Caco-2 (cell line): ENCODE measurements at regions of chr1 and their contacts with region 1.

Region 1: GRCh38 chr1:213956295-213956770 is 31.4 kb upstream of the PROX1 start:
- DNase-seq: peak; percentile 77 to 82
- H3K4me3 ChIP-seq: no peak overlapping the region
- H3K4me3 Mint-ChIP-seq: peak overlapping the region; percentile 48
- H3K27ac Mint-ChIP-seq: peak overlapping the region; percentile 69
- H3K4me1 ChIP-seq: peaks cover 33% of the 10 kb centered on the region
- H3K4me1 Mint-ChIP-seq: peaks cover 18% of the 10 kb centered on the region
- H3K27me3 ChIP-seq: no peaks in the 10 kb centered on the region
- H3K27me3 Mint-ChIP-seq: no peaks in the 10 kb centered on the region
- CTCF ChIP-seq: no peak

Region 2: GRCh38 chr1:213977486-213977842 is 21.1 kb after region 1 on chr1:
- CTCF ChIA-PET with region 1: interaction called, 9 read pairs
- POLR2A ChIA-PET with region 1: no interaction called
- intact Hi-C with region 1: loop called (anchors 2 kb)
- DNase-seq: no peak
- H3K4me3 ChIP-seq: no peak overlapping the region
- H3K4me3 Mint-ChIP-seq: no peak overlapping the region
- H3K27ac Mint-ChIP-seq: no peak overlapping the region
- H3K4me1 ChIP-seq: peaks cover 21% of the 10 kb centered on the region
- H3K4me1 Mint-ChIP-seq: peaks cover 7% of the 10 kb centered on the region
- H3K27me3 ChIP-seq: no peaks in the 10 kb centered on the region
- H3K27me3 Mint-ChIP-seq: peaks cover 5% of the 10 kb centered on the region
- CTCF ChIP-seq: no peak